Common myeloid progenitor, CD34-positive (primary cell): ENCODE measurements at regions of chr20 and their contacts with region 1.

Region 1: DNA sequence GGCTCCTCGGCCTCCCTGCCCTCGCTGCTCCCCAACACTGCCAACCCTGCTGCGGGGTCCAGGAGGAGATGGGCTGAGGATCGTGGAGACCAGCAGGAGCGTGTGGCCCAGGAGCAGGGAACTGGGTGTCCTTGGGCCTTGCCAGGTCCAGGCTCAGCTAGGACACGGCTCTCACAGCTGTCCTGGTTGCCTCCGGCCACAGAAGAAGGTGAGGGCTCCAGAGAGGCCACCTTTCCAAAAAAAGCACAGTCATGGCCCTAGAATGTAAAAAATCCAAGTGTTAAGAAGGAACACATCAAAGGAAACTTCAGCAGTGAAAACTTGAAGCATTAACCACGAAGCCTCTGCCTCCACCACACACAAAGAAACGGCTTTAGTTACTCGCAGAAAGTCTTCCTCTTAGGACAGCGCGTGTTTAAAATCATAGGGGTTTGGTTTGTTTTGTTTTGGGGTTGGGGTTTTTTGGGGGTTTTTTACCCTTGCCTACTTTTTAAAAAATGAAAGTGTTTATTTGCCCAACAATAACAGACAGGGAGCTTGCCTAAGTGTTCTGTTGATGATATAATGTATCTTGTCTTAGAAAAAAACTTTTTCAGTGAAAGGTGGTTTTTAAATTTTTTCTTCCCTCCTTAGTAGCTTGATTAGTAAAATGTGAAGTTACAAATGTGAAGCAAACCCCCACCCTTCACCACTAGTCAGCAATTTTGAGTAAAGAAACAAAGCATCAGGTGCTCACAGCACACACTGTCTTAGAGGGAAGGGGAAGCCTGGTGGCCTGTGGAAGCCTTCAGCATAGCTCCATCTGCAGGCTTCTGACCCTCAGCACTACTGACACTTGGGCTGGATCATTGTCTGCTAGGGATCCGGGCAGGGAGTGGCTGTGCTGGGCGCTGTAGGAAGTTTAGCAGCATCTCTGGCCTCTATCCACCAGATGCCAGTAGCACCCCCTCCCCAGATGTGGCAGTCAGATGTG is 60.0 kb downstream of the PTPN1 start:
- DNase-seq: peak; percentile 77 to 87 (median 86)
- H3K4me3 ChIP-seq: peak overlapping the region in 2 of 7 experiments; percentile 11 to 16
- H3K27ac ChIP-seq: peak overlapping the region; percentile 36 to 72
- H3K4me1 ChIP-seq: peaks cover 5 to 47% (median 45%) of the 10 kb centered on the region in 4 experiments
- H3K27me3 ChIP-seq: no peaks in the 10 kb centered on the region

Region 2: GRCh38 chr20:50189681-50190582 is 380.2 kb before region 1 on chr20:
- CTCF ChIA-PET with region 1: interaction called, 60 read pairs
- POLR2A ChIA-PET with region 1: no interaction called
- DNase-seq: peak; percentile 83 to 91 (median 90)
- H3K4me3 ChIP-seq: peak overlapping the region in 6 of 7 experiments; percentile 79 to 91 (median 86)
- H3K27ac ChIP-seq: peak overlapping the region; percentile 61 to 91
- H3K4me1 ChIP-seq: peaks cover 2 to 48% (median 38%) of the 10 kb centered on the region in 4 experiments
- H3K27me3 ChIP-seq: no peaks in the 10 kb centered on the region

Region 3: DNA sequence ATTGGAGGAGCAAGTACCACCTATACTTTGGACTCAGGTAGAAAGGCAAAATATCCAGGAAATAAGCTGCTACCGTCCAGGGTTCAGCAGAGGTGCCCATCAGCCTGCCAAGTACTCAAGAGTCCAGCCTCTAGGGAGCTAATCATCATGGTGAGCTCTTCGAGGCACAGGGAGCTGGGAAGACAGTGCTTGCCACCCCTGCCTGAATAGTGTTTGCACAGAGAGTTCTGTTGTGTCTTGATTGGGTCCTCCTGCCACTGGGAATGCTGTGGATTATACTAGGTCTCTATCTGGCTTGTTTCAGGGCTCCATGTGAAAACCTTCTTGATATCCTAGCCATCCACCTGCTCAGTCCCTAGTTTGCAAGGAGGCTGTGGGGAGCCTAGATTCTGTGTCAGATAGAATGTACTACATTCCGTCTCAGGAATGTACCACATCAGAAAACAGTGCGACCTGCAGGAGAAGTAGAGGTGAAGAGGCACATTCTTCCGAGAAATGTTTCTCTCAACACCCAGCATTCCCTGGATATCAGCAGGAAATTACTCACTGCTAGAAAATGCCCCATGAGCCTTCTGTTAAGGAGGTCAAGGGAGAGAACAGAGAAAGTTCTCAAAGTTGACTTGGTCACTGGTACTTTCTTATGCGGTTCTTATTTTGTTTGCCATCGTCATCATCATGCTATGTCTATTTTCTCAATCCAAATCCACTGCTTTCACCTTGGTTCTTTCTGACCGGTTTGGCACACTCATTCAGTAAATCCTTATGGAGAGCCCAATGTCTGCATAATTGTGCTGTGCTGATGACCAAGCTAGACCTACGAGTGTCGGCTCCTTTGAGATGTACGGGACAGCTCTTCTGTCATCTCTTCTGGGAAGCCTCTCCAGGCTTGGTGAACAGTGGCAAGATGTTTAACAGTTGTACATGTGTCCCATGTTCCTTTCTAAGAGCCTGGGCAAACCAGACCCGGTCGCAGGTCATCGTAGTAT is 29.2 kb before region 1 on chr20:
- CTCF ChIA-PET with region 1: interaction called, 31 read pairs
- POLR2A ChIA-PET with region 1: interaction called, 3 read pairs
- DNase-seq: no peak
- H3K4me3 ChIP-seq: peak overlapping the region in 4 of 7 experiments; percentile 21 to 47 (median 38)
- H3K27ac ChIP-seq: peak overlapping the region in 1 of 2 experiments; percentile 44
- H3K4me1 ChIP-seq: peaks cover 48 to 81% (median 64%) of the 10 kb centered on the region in 4 experiments
- H3K27me3 ChIP-seq: no peaks in the 10 kb centered on the region

Region 4: DNA sequence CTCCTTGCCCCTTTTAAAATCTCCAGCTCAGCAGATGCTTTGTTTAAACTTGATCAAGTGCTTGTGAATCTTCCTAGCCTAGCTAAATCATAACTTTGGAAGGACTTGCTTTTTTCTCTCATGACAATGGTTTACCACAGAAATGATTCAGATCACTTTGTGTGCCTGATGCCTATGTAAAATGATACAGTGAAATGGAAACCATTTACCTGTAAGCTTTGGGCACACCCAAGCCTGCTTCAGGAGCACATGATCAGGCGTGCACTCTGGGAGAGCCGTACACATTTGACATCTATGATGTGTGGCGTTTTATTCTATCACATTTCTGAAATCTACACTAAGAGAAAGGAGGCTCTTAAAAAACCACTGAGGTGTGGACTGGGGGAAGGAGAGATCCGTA is 18.9 kb before region 1 on chr20:
- CTCF ChIA-PET with region 1: interaction called, 21 read pairs
- POLR2A ChIA-PET with region 1: interaction called, 4 read pairs
- DNase-seq: no peak
- H3K4me3 ChIP-seq: no peak overlapping the region
- H3K27ac ChIP-seq: no peak overlapping the region
- H3K4me1 ChIP-seq: peaks cover 5 to 57% (median 33%) of the 10 kb centered on the region in 4 experiments
- H3K27me3 ChIP-seq: no peaks in the 10 kb centered on the region

Region 5: DNA sequence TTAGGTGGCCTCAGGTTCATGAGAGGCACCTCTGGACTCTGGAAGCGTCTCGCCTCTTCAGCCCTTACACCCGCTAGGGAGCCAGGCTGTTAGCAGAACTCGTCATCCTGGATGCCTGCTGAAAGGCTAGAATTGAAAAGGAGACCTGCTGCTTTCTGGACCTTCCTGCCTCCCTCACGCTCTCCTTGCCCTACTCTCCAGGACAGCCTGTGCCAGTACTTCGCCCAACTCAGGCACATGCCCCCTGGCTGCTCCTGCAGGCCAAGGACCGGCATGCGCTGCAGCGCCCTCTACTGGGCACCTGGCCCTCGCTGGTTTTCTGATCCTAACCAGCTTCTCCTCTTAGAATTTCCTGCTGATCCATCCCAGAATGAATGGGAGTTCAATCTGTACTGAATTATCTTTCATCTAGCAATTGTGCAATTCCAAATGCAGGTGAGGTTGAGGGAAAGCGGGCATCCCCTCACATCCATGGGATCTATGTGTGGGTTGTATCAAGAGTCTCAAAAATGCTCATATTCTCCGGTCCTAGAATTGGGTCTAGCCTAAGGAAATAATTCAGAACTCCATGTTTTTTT is 18.0 kb after region 1 on chr20:
- CTCF ChIA-PET with region 1: interaction called, 20 read pairs
- POLR2A ChIA-PET with region 1: no interaction called
- DNase-seq: peak; percentile 59 to 71 (median 68)
- H3K4me3 ChIP-seq: no peak overlapping the region
- H3K27ac ChIP-seq: no peak overlapping the region
- H3K4me1 ChIP-seq: no peaks in the 10 kb centered on the region
- H3K27me3 ChIP-seq: no peaks in the 10 kb centered on the region